CD14-positive monocyte (primary cell): ENCODE measurements at regions of chr17 and their contacts with region 1.

Region 1: GRCh38 chr17:75059369-75060345 is 12.6 kb downstream of the KCTD2 start:
- DNase-seq: no peak
- H3K4me3 ChIP-seq: no peak overlapping the region
- H3K4me3 Mint-ChIP-seq: no peak overlapping the region
- H3K27ac ChIP-seq: no peak overlapping the region
- H3K27ac Mint-ChIP-seq: peak overlapping the region in 5 of 7 donors; percentile 20 to 86 (median 30)
- H3K4me1 ChIP-seq: no peaks in the 10 kb centered on the region
- H3K4me1 Mint-ChIP-seq: peaks cover 7% of the 10 kb centered on the region
- H3K27me3 ChIP-seq: no peaks in the 10 kb centered on the region
- H3K27me3 Mint-ChIP-seq: no peaks in the 10 kb centered on the region
- CTCF ChIP-seq: peak; percentile 27

Region 2: GRCh38 chr17:74923533-74924249 is 136.0 kb before region 1 on chr17:
- intact Hi-C with region 1: no loop called
- DNase-seq: peak; percentile 67 to 76 (median 68)
- H3K4me3 ChIP-seq: peak overlapping the region; percentile 8 to 75 (median 33)
- H3K4me3 Mint-ChIP-seq: peak overlapping the region; percentile 71 to 84
- H3K27ac ChIP-seq: no peak overlapping the region
- H3K27ac Mint-ChIP-seq: peak overlapping the region in 2 of 7 donors; percentile 55 to 64
- H3K4me1 ChIP-seq: peaks cover 29 to 45% of the 10 kb centered on the region in 2 donors
- H3K4me1 Mint-ChIP-seq: peaks cover 33% of the 10 kb centered on the region
- H3K27me3 ChIP-seq: peaks cover 27 to 68% of the 10 kb centered on the region in 2 donors
- H3K27me3 Mint-ChIP-seq: peaks cover 64 to 84% (median 68%) of the 10 kb centered on the region in 3 donors
- CTCF ChIP-seq: peak; percentile 98

Region 3: GRCh38 chr17:75205037-75205792 is 145.6 kb after region 1 on chr17 and contains the start of gene NUP85:
- intact Hi-C with region 1: loop called in 1 of 2 experiments (anchors 10 kb)
- DNase-seq: peak; percentile 82 to 83 (median 82)
- H3K4me3 ChIP-seq: peak within 1 kb of the TSS; percentile 59 to 93 (median 77)
- H3K4me3 Mint-ChIP-seq: peak within 1 kb of the TSS; percentile 91 to 96
- H3K27ac ChIP-seq: peak within 1 kb of the TSS; percentile 92 to 93
- H3K27ac Mint-ChIP-seq: peak within 1 kb of the TSS; percentile 94 to 99 (median 99)
- H3K4me1 ChIP-seq: peaks cover 19 to 25% of the 10 kb centered on the region in 2 donors
- H3K4me1 Mint-ChIP-seq: peaks cover 21% of the 10 kb centered on the region
- H3K27me3 ChIP-seq: no peaks in the 10 kb centered on the region
- H3K27me3 Mint-ChIP-seq: no peaks in the 10 kb centered on the region
- CTCF ChIP-seq: no peak
- polyA plus RNA-seq, gene NUP85: 36.3 to 94.2 (median 38.7) TPM